ENCODE measurements at regions of chr1 and their contacts with region 1.

Region 1: DNA sequence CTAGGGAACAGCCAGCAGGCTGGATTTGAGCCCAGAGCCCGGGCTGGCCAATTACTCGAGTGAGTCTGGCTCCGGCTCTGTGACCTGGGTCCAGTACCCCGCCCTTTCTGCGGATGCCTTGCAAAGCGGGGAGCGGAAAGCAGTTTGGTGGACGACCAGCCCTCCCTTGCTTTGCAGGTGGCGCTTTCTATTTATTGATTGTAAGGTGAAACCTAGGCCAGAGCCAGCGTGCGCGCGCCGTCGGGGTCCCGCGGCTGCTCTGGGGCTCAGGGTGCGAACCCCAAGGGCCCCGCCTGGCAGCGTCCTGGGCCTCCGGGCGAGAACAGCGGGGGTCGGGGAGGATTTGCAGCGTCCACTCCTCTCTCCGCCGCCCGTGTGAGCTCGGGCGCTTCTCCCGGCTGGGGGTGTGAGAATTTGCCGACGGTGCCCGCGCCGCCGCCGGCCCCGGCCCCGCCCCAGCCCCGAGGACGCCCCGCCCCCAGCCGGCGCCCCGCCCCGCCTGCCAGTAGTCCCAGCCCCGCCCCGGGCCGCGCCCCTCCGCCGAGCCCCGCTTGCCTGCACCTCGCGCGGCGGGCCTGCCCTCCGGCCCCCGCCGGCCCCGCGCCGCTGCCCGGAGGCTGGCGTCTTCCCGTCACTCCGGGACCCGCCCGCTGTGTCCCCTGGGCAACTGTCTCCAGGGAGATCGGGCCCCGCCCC is 37.6 kb downstream of the PIK3CD start:
- DNase-seq: peak; percentile 93
- ATAC-seq: peak; percentile 78
- H3K4me3 Mint-ChIP-seq: peak overlapping the region; percentile 70
- H3K27ac Mint-ChIP-seq: peak overlapping the region; percentile 77
- H3K4me1 Mint-ChIP-seq: peaks cover 70% of the 10 kb centered on the region
- H3K27me3 Mint-ChIP-seq: no peaks in the 10 kb centered on the region

Region 2: GRCh38 chr1:9671377-9672140 is 17.6 kb before region 1 on chr1:
- CTCF ChIA-PET with region 1: interaction called, 4 read pairs
- POLR2A ChIA-PET with region 1: no interaction called
- intact Hi-C with region 1: loop called (anchors 1 to 2 kb)
- DNase-seq: peak; percentile 51
- ATAC-seq: peak; percentile 82
- H3K4me3 Mint-ChIP-seq: no peak overlapping the region
- H3K27ac Mint-ChIP-seq: peak overlapping the region; percentile 86
- H3K4me1 Mint-ChIP-seq: peaks cover 75% of the 10 kb centered on the region
- H3K27me3 Mint-ChIP-seq: no peaks in the 10 kb centered on the region

Region 3: DNA sequence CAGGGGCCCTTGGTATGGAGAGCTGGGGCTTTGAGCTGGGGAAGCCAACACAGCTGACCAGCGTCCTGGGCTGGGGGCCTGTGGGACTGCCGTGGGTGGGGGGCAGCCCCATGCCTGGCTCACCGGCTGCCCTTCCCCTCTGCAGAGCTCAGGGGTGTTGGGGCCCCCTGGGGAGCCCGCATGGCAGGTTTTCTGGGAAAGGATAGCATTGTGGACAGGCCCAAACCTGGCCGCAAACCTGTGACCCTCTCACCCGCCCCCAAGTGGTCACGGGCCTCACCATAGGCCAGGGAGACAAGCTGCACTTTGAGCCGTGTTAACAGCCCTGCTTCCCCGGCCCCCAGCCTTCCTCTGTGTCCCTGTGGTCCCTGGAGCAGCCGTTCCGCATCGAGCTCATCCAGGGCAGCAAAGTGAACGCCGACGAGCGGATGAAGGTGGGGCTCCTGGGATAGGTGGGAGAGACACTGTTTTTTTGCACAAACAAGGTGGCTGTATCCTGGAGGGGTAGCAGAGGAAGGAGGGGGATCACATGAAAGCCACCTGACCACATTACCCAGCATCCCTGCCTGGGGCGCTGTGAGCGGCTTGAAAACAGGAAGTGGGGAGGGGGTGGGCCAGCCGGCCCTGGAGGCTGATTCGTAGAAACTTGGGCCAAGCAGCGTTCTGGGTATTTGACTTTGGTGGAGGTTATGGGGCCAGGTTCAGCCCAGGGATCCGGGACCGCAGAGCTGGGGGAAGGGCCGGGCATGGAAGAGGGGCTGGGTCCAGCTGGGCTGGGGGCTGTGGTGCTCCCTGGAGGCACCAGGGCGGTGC is 28.2 kb after region 1 on chr1:
- CTCF ChIA-PET with region 1: interaction called, 3 read pairs
- POLR2A ChIA-PET with region 1: no interaction called
- intact Hi-C with region 1: loop called in 1 of 2 experiments (anchors 1 kb)
- DNase-seq: peak; percentile 93
- ATAC-seq: peak; percentile 81
- H3K4me3 Mint-ChIP-seq: peak overlapping the region; percentile 76
- H3K27ac Mint-ChIP-seq: peak overlapping the region; percentile 93
- H3K4me1 Mint-ChIP-seq: peaks cover 62% of the 10 kb centered on the region
- H3K27me3 Mint-ChIP-seq: no peaks in the 10 kb centered on the region

Region 4: GRCh38 chr1:10283318-10283984 is 594.3 kb after region 1 on chr1:
- CTCF ChIA-PET with region 1: no interaction called
- POLR2A ChIA-PET with region 1: no interaction called
- intact Hi-C with region 1: no loop called
- DNase-seq: peak; percentile 62
- ATAC-seq: peak; percentile 94
- H3K4me3 Mint-ChIP-seq: no peak overlapping the region
- H3K27ac Mint-ChIP-seq: peak overlapping the region; percentile 26
- H3K4me1 Mint-ChIP-seq: peaks cover 30% of the 10 kb centered on the region
- H3K27me3 Mint-ChIP-seq: no peaks in the 10 kb centered on the region